ENCODE measurements at regions of chr2 and their contacts with region 1.

Region 1: GRCh38 chr2:61670591-61671501 is 132.7 kb upstream of the XPO1 start:
- DNase-seq: peak; percentile 56 to 74
- ATAC-seq: peak; percentile 93 to 96
- H3K4me3 ChIP-seq: peak overlapping the region; percentile 24 to 51 (median 38)
- H3K27ac ChIP-seq: peak overlapping the region; percentile 85 to 88 (median 86)
- H3K4me1 ChIP-seq: peaks cover 17 to 19% of the 10 kb centered on the region in 2 donors
- H3K27me3 ChIP-seq: no peaks in the 10 kb centered on the region
- CTCF ChIP-seq: no peak
- POLR2A ChIP-seq: no peak

Region 2: GRCh38 chr2:61144697-61145268 is 526.1 kb before region 1 on chr2:
- in situ Hi-C with region 1: no loop called
- intact Hi-C with region 1: loop called (anchors 10 kb)
- DNase-seq: peak; percentile 85 to 93
- ATAC-seq: peak; percentile 99 to 100
- H3K4me3 ChIP-seq: peak overlapping the region; percentile 53 to 75 (median 67)
- H3K27ac ChIP-seq: peak overlapping the region; percentile 69 to 85 (median 73)
- H3K4me1 ChIP-seq: peaks cover 4 to 7% of the 10 kb centered on the region in 2 donors
- H3K27me3 ChIP-seq: no peaks in the 10 kb centered on the region
- CTCF ChIP-seq: no peak
- POLR2A ChIP-seq: peak; percentile 21 to 36

Region 3: DNA sequence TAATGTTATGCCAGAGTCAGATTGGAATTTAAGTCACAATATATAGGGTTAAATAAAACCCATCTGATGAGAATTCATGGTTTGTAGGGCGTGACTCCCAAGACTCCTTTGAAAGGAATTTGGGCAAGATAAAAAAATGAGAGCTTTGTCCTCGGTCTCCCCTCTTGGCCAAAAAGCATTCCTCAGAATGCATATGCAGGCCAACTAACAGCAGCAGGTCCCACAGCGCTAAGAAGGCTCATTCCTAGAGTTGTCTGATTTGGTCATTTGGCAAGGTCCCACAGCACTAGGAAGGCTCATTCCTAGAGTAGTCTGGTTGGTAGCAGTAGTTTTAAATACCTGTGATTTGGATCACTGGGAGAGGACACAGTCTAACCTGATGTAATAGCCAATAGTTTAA is 418.8 kb after region 1 on chr2:
- in situ Hi-C with region 1: no loop called
- intact Hi-C with region 1: no loop called
- DNase-seq: no peak
- ATAC-seq: no peak
- H3K4me3 ChIP-seq: no peak overlapping the region
- H3K27ac ChIP-seq: no peak overlapping the region
- H3K4me1 ChIP-seq: no peaks in the 10 kb centered on the region
- H3K27me3 ChIP-seq: no peaks in the 10 kb centered on the region
- CTCF ChIP-seq: no peak
- POLR2A ChIP-seq: no peak

Region 4: DNA sequence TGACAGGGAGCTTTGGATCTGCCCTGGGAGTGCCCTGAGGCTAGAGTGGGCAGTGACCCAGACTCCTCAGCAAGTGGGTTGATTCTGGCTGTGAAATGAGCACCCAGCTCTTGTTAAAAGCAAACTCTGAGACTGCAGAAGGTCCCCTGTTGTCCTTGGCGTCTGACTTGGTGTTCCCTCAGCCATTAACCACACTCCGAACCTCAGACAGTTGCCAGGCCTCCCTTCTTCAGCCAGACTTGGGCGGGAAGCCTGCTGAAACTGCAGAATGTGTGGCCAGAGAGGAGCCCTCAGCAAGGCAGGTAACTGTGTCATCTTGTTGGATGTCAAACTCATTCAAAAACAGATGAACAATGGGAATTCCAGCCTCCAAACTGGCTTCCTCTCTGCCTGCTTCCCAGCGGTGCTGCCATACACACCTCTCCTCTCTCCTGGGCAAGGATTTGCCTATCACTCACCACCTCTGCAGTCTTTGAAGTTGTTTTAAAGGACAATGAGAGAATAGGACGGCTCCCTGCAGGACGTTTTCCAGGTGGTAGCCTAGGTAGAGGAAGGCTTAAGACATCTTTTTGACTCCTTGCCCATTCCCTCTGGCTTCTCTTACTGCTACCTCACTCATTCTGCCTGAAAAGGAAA is 486.1 kb after region 1 on chr2:
- in situ Hi-C with region 1: no loop called
- intact Hi-C with region 1: no loop called
- DNase-seq: no peak
- ATAC-seq: no peak
- H3K4me3 ChIP-seq: no peak overlapping the region
- H3K27ac ChIP-seq: no peak overlapping the region
- H3K4me1 ChIP-seq: peaks cover 4 to 6% of the 10 kb centered on the region in 2 donors
- H3K27me3 ChIP-seq: no peaks in the 10 kb centered on the region
- CTCF ChIP-seq: no peak
- POLR2A ChIP-seq: no peak